PC-9 (cell line): ENCODE measurements at regions of chr12 and their contacts with region 1.

Region 1: DNA sequence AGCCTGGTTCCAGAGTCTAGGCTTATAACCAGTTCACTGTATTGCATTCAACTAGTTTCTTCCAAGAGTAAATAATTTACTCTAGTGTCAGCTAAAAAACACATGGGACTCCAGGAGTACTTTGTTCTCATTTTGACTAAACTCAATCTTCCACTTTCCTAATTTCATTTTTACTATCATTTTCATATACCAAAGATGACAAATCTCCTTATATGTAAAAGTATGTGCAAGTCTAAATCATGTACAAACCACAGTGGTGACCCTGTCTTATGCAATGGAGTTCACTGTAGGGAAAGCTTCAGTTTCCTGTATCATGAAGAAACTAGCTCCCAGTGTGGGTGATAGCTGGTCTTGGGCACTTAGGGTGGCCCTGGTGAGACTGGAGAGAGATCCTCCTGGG is 151.6 kb downstream of the HELB start:
- DNase-seq: no peak
- H3K4me3 ChIP-seq: no peak overlapping the region
- H3K27ac ChIP-seq: no peak overlapping the region
- H3K4me1 ChIP-seq: no peaks in the 10 kb centered on the region
- H3K27me3 ChIP-seq: no peaks in the 10 kb centered on the region
- CTCF ChIP-seq: no peak

Region 2: GRCh38 chr12:66428261-66428660 is 25.6 kb before region 1 on chr12:
- CTCF ChIA-PET with region 1: no interaction called
- POLR2A ChIA-PET with region 1: no interaction called
- intact Hi-C with region 1: no loop called
- DNase-seq: no peak
- H3K4me3 ChIP-seq: no peak overlapping the region
- H3K27ac ChIP-seq: no peak overlapping the region
- H3K4me1 ChIP-seq: no peaks in the 10 kb centered on the region
- H3K27me3 ChIP-seq: no peaks in the 10 kb centered on the region
- CTCF ChIP-seq: no peak

Region 3: GRCh38 chr12:66573605-66574004 is 119.8 kb after region 1 on chr12:
- CTCF ChIA-PET with region 1: no interaction called
- POLR2A ChIA-PET with region 1: no interaction called
- intact Hi-C with region 1: loop called (anchors 10 kb)
- DNase-seq: no peak
- H3K4me3 ChIP-seq: no peak overlapping the region
- H3K27ac ChIP-seq: no peak overlapping the region
- H3K4me1 ChIP-seq: no peaks in the 10 kb centered on the region
- H3K27me3 ChIP-seq: no peaks in the 10 kb centered on the region
- CTCF ChIP-seq: no peak